ENCODE measurements at regions of chr6 and their contacts with region 1.

Region 1: DNA sequence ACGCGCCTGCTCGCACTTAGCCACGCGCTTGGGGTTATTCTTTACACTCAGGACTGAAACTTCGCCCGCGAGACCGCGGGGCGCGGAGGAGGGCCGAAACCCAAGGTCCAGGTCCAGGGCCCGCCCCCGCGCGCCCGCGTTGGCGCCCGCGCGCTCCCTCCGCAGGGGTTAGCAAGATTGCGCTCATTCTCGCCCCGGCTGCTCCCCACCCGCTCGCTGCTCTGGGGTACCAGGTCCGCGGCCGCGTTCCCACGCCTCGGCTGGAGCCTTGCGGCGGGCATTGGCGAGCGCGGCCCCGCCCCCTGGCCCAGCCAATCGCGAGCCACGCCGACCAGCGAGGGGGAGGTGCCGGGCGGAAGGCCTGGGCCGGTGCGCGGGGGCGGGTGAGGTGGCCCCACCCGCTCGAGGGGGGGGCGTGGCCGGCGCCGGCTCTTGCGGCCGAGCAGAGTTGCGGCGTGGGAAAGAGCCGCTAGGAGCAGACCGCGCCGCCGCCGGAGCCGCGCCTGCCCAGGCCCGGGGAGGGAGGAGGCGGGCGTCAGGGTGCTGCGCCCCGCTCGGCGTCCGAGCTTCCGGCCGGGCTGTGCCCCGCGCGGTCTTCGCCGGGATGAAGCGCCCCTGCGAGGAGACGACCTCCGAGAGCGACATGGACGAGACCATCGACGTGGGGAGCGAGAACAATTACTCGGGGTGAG is at the start of gene HEY2:
- DNase-seq: peak; percentile 91
- ATAC-seq: peak; percentile 78
- H3K4me3 Mint-ChIP-seq: peak within 1 kb of the TSS; percentile 74
- H3K27ac Mint-ChIP-seq: no peak within 1 kb of the TSS
- H3K4me1 Mint-ChIP-seq: peaks cover 35% of the 10 kb centered on the region
- H3K27me3 Mint-ChIP-seq: peaks cover 57% of the 10 kb centered on the region
- total RNA-seq, gene HEY2: not detected

Region 2: GRCh38 chr6:125153391-125154117 is 595.8 kb before region 1 on chr6 and contains the start of gene TPD52L1:
- CTCF ChIA-PET with region 1: no interaction called
- POLR2A ChIA-PET with region 1: no interaction called
- intact Hi-C with region 1: loop called in 1 of 2 experiments (anchors 5 kb)
- DNase-seq: peak; percentile 81
- ATAC-seq: peak; percentile 94
- H3K4me3 Mint-ChIP-seq: peak within 1 kb of the TSS; percentile 64
- H3K27ac Mint-ChIP-seq: no peak within 1 kb of the TSS
- H3K4me1 Mint-ChIP-seq: peaks cover 5% of the 10 kb centered on the region
- H3K27me3 Mint-ChIP-seq: peaks cover 36% of the 10 kb centered on the region
- total RNA-seq, gene TPD52L1: 0.89 to 1.4 TPM

Region 3: GRCh38 chr6:125314019-125314581 is 435.2 kb before region 1 on chr6:
- CTCF ChIA-PET with region 1: interaction called, 66 read pairs
- POLR2A ChIA-PET with region 1: no interaction called
- intact Hi-C with region 1: loop called (anchors 1 kb)
- DNase-seq: peak; percentile 62
- ATAC-seq: peak; percentile 74
- H3K4me3 Mint-ChIP-seq: no peak overlapping the region
- H3K27ac Mint-ChIP-seq: no peak overlapping the region
- H3K4me1 Mint-ChIP-seq: no peaks in the 10 kb centered on the region
- H3K27me3 Mint-ChIP-seq: peaks cover 2% of the 10 kb centered on the region

Region 4: GRCh38 chr6:125764121-125764671 is 14.9 kb after region 1 on chr6:
- CTCF ChIA-PET with region 1: interaction called, 34 read pairs
- POLR2A ChIA-PET with region 1: no interaction called
- intact Hi-C with region 1: no loop called
- DNase-seq: no peak
- ATAC-seq: no peak
- H3K4me3 Mint-ChIP-seq: no peak overlapping the region
- H3K27ac Mint-ChIP-seq: no peak overlapping the region
- H3K4me1 Mint-ChIP-seq: no peaks in the 10 kb centered on the region
- H3K27me3 Mint-ChIP-seq: peaks cover 31% of the 10 kb centered on the region

Region 5: DNA sequence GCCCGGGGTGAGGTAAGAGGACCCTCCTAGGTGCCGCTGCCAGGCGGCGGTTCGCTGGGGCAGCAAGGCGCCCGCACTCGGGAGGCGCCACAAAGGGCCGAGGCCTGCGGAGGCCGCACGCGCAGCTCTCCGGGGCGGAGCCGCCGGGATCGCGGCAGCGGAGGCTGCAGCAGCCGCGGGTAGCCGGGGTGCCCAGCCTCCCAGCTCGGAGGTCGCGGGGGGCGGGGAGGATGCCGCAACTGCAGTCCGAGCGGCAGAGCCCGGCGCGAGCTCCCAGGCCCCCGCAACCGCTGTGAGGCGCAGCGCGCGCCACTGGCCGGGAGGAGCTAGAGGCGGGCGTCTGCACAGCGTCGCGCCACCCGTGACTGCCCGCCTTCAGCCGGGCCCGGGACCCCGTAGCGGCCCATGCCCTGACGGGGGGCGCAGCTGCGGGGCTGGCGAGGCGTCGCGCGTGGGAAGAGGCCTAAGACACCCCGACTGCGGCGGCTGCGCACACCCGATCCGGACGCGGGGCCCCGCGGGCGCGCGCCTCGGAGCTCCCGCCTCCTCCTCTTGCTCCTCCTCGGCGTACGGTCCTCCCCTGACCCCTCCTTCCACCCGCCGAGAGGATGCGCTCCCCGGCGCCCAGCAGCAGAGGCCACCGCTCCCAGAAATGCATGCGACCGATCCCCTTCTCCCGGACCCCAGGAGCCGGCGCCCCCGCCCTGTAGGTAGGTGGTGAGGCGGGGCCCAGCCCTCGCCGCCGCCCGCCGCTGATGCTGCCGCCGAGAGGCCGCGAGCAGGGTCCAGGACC is 41.2 kb after region 1 on chr6 and contains the start of gene NCOA7:
- CTCF ChIA-PET with region 1: interaction called, 4 read pairs
- POLR2A ChIA-PET with region 1: interaction called, 3 read pairs
- intact Hi-C with region 1: loop called in 1 of 2 experiments (anchors 1 kb)
- DNase-seq: peak; percentile 89
- ATAC-seq: peak; percentile 76
- H3K4me3 Mint-ChIP-seq: peak within 1 kb of the TSS; percentile 96
- H3K27ac Mint-ChIP-seq: peak within 1 kb of the TSS; percentile 95
- H3K4me1 Mint-ChIP-seq: peaks cover 52% of the 10 kb centered on the region
- H3K27me3 Mint-ChIP-seq: no peaks in the 10 kb centered on the region
- total RNA-seq, gene NCOA7: 54.3 to 67.4 TPM

Region 6: GRCh38 chr6:125867483-125867935 is 118.2 kb after region 1 on chr6:
- CTCF ChIA-PET with region 1: no interaction called
- POLR2A ChIA-PET with region 1: no interaction called
- intact Hi-C with region 1: no loop called
- DNase-seq: no peak
- ATAC-seq: no peak
- H3K4me3 Mint-ChIP-seq: no peak overlapping the region
- H3K27ac Mint-ChIP-seq: no peak overlapping the region
- H3K4me1 Mint-ChIP-seq: no peaks in the 10 kb centered on the region
- H3K27me3 Mint-ChIP-seq: no peaks in the 10 kb centered on the region